Dorsolateral prefrontal cortex (tissue), 120 donors: ENCODE measurements at regions of chr19 and their contacts with region 1.

Region 1: GRCh38 chr19:12495002-12495802 is 10.6 kb upstream of the ZNF709 start:
- DNase-seq: peak; percentile 93 to 98 (median 97)
- H3K4me3 ChIP-seq: peak overlapping the region; percentile 61 to 96 (median 79)
- H3K27ac ChIP-seq: peak overlapping the region; percentile 22 to 98 (median 90)
- H3K27me3 ChIP-seq: no peaks in the 10 kb centered on the region
- CTCF ChIP-seq: peak in 55 of 56 donors; percentile 21 to 88 (median 67)

Region 2: DNA sequence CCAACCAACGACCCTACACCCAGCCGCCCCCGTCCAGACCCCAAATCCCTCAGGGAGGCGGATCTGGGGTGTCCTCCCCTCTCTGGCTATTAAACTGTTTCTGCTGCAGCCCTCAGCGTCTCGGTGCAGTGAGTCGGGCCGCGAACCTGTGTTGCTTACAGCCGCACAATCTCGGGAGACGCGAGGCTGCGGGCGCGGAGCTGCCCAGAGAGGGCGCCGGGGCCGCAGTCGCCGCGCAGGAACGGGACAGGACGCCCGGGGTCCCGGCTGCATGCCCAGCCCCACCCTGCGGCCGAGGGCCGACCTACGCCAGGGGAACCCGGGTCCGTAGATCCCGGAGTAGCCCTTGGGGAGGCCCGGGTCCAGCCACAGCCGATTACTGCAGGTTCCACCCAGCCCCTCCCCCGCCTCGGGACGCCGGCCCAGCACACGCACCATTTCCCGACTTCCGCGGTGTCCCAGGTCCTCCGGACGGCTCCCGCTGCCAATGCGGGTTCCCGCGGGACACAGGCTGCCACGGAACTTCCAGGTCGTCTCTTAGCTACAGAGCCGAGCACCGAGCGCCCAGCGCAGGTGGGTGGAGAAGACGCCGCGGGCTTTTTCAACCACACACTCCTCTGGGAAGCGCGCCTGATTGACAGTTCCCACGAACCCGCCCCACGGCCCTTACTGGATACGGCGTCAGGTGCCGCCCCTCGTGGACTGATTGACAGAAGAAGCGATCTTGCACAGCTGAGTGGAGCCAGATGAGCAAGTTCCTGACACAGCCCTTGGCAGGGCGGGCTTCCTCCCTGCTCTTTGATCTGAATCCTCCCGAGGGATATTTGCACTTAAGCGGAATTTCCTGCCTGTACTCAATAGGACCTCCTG is 94.3 kb before region 1 on chr19 and contains the start of gene ZNF799:
- intact Hi-C with region 1: no loop called
- DNase-seq: peak; percentile 96 to 99 (median 99)
- H3K4me3 ChIP-seq: peak within 1 kb of the TSS; percentile 35 to 92 (median 82)
- H3K27ac ChIP-seq: peak within 1 kb of the TSS in 55 of 59 donors; percentile 14 to 90 (median 73)
- H3K27me3 ChIP-seq: no peaks in the 10 kb centered on the region
- CTCF ChIP-seq: peak in 23 of 56 donors; percentile 10 to 52 (median 17)
- total RNA-seq, gene ZNF799: 2.2 to 7.1 (median 4.3) TPM

Region 3: GRCh38 chr19:12450844-12451243 is 44.4 kb before region 1 on chr19:
- intact Hi-C with region 1: no loop called
- DNase-seq: no peak
- H3K4me3 ChIP-seq: no peak overlapping the region
- H3K27ac ChIP-seq: no peak overlapping the region
- H3K27me3 ChIP-seq: no peaks in the 10 kb centered on the region
- CTCF ChIP-seq: no peak

Region 4: DNA sequence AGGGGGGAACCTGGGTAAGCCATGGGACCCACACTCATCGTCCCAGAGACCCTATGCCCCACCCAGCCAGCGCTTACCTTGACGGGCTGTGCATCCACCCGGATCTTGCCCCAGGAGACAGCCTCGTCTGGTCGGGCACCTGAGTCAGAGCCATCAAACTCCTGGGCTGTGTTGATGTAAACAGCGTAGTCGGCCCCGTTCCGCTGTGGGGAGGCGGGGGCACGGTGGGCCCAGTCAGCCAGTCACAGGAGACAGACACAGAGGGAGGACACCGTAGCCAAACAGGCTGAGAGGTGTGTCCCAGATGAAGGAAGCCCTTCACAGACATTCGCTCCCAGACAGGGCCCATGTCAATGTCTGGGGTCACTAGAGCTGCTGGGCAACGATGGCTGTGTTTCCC is 180.7 kb after region 1 on chr19:
- intact Hi-C with region 1: loop called in 1 of 2 experiments (anchors 2 kb)
- DNase-seq: no peak
- H3K4me3 ChIP-seq: no peak overlapping the region
- H3K27ac ChIP-seq: peak overlapping the region in 1 of 59 donors; percentile 28
- H3K27me3 ChIP-seq: no peaks in the 10 kb centered on the region
- CTCF ChIP-seq: no peak